ENCODE measurements at regions of chr1 and their contacts with region 1.

Region 1: DNA sequence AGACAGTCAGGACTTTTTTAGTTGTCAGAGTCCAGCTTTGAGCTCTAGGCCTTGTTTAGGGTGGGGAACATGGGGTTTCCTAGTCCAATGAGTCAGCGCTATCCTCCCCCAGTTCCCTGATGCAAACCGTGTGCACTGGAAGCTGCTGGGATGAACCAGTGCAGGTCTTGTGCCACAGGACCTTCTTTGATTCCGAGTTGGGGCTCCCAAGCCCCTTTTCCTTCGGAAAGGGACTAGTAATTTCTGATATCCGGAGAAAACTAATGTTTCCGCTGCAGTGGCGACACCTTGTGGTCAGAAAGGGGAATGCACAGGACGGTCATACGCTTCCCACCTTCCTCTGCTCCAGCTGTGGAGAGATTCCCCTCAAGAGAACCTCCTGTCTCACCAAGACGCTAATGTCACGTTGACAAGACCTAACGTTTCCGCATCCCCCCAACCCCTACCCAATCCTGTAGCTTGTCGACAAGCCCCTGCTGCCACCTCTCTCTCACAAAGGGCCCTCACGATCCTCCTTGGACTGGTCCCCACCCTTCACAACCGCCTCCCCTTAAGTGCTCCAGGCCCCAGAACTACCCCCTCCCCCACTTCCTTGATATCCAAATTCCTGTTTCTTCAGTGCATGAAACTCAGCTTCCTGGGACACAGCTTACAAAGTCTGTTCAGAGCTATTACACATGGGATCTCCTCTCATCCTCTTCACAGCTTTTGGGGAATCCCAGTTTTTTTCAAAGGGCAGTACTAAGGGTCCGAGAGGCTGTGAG is 30.9 kb downstream of the GPA33 start:
- DNase-seq: peak; percentile 77 to 96
- H3K4me3 ChIP-seq: peak overlapping the region in 2 of 4 experiments; percentile 7 to 35; a peak in 3 of 8 replicates
- H3K27ac ChIP-seq: no peak overlapping the region
- H3K4me1 ChIP-seq: peaks cover 0 to 8% (median 2%) of the 10 kb centered on the region in 4 experiments; a peak in 4 of 7 replicates
- H3K27me3 ChIP-seq: no peaks in the 10 kb centered on the region
- CTCF ChIP-seq: peak; percentile 86 to 98 (median 92)
- EP300 ChIP-seq: no peak
- POLR2A ChIP-seq: no peak
- RAD21 ChIP-seq: peak; percentile 90 to 94

Region 2: DNA sequence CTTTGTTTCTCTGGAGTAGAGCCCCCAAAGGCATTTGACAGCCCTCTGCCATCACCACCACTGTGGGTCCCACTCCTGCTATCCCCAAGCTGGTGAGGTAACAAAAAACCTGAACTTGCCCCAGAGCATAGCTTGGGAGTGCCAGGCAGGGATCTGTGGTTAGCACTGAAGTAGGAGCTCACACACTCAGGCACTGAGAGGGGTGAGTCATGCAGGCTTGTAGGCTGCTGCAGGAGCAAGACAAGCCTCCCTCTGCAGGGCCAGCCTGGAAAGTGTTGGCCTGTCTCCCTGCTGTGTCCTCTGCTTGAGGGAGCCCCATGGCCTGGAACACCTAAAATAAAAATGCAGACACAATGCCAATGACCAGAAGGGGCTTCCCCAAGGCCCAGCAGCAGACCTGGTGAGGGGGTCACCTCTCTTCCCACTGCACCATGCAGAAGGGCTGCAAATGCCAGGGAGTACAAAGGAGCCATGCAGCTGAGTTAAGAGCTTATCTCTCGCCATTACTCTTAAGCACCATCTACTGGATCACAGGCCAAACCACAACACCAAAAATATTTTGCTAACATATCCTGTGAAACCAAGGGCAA is 328.8 kb before region 1 on chr1:
- CTCF ChIA-PET with region 1: no interaction called
- POLR2A ChIA-PET with region 1: no interaction called
- DNase-seq: no peak
- H3K4me3 ChIP-seq: no peak overlapping the region
- H3K27ac ChIP-seq: no peak overlapping the region
- H3K4me1 ChIP-seq: no peaks in the 10 kb centered on the region
- H3K27me3 ChIP-seq: no peaks in the 10 kb centered on the region
- CTCF ChIP-seq: peak in 1 of 3 experiments; percentile 45; a peak in 1 of 4 replicates
- EP300 ChIP-seq: no peak
- POLR2A ChIP-seq: no peak
- RAD21 ChIP-seq: peak; percentile 48 to 60

Region 3: GRCh38 chr1:166900987-166901386 is 158.2 kb before region 1 on chr1:
- CTCF ChIA-PET with region 1: interaction called, 874 read pairs
- POLR2A ChIA-PET with region 1: interaction called, 3 read pairs
- DNase-seq: no peak
- H3K4me3 ChIP-seq: no peak overlapping the region
- H3K27ac ChIP-seq: no peak overlapping the region
- H3K4me1 ChIP-seq: no peaks in the 10 kb centered on the region; a peak in 1 of 7 replicates
- H3K27me3 ChIP-seq: no peaks in the 10 kb centered on the region
- CTCF ChIP-seq: no peak
- EP300 ChIP-seq: no peak
- POLR2A ChIP-seq: no peak
- RAD21 ChIP-seq: no peak

Region 4: GRCh38 chr1:166975361-166976129 is 83.7 kb before region 1 on chr1 and contains the start of gene ILDR2:
- CTCF ChIA-PET with region 1: interaction called, 43 read pairs
- POLR2A ChIA-PET with region 1: no interaction called
- DNase-seq: peak; percentile 25 to 75
- H3K4me3 ChIP-seq: peak within 1 kb of the TSS; percentile 49 to 81 (median 58)
- H3K27ac ChIP-seq: no peak within 1 kb of the TSS
- H3K4me1 ChIP-seq: peaks cover 0 to 11% (median under 1%) of the 10 kb centered on the region in 4 experiments; a peak in 3 of 7 replicates
- H3K27me3 ChIP-seq: peaks cover 24 to 44% (median 39%) of the 10 kb centered on the region in 4 experiments
- CTCF ChIP-seq: peak in 2 of 3 experiments; percentile 6 to 13; a peak in 1 of 4 replicates
- EP300 ChIP-seq: no peak
- POLR2A ChIP-seq: no peak
- RAD21 ChIP-seq: peak in 1 of 2 experiments; percentile 19; a peak in 1 of 4 replicates
- total RNA-seq, gene ILDR2: 0.86 and 1.5 TPM in 2 replicates

Region 5: GRCh38 chr1:167088716-167089417 is 29.6 kb after region 1 on chr1:
- CTCF ChIA-PET with region 1: interaction called, 22 read pairs
- POLR2A ChIA-PET with region 1: no interaction called
- DNase-seq: no peak
- H3K4me3 ChIP-seq: no peak overlapping the region
- H3K27ac ChIP-seq: no peak overlapping the region
- H3K4me1 ChIP-seq: peaks cover 0 to 4% (median under 1%) of the 10 kb centered on the region in 4 experiments; a peak in 3 of 7 replicates
- H3K27me3 ChIP-seq: no peaks in the 10 kb centered on the region
- CTCF ChIP-seq: no peak
- EP300 ChIP-seq: no peak
- POLR2A ChIP-seq: no peak
- RAD21 ChIP-seq: no peak

Region 6: GRCh38 chr1:167148421-167148820 is 89.2 kb after region 1 on chr1:
- CTCF ChIA-PET with region 1: interaction called, 13 read pairs
- POLR2A ChIA-PET with region 1: no interaction called
- DNase-seq: no peak
- H3K4me3 ChIP-seq: peak overlapping the region in 1 of 4 experiments; percentile 15; a peak in 3 of 8 replicates
- H3K27ac ChIP-seq: no peak overlapping the region
- H3K4me1 ChIP-seq: peaks cover 0 to 4% (median 1%) of the 10 kb centered on the region in 4 experiments; a peak in 2 of 7 replicates
- H3K27me3 ChIP-seq: no peaks in the 10 kb centered on the region
- CTCF ChIP-seq: no peak
- EP300 ChIP-seq: no peak
- POLR2A ChIP-seq: no peak
- RAD21 ChIP-seq: no peak

Region 7: GRCh38 chr1:167191953-167192352 is 132.7 kb after region 1 on chr1:
- CTCF ChIA-PET with region 1: no interaction called
- POLR2A ChIA-PET with region 1: no interaction called
- DNase-seq: no peak
- H3K4me3 ChIP-seq: no peak overlapping the region
- H3K27ac ChIP-seq: no peak overlapping the region
- H3K4me1 ChIP-seq: no peaks in the 10 kb centered on the region; a peak in 1 of 7 replicates
- H3K27me3 ChIP-seq: no peaks in the 10 kb centered on the region
- CTCF ChIP-seq: no peak
- EP300 ChIP-seq: no peak
- POLR2A ChIP-seq: no peak
- RAD21 ChIP-seq: no peak